ENCODE measurements at regions of chr22 and their contacts with region 1.

Region 1: GRCh38 chr22:30733181-30733631 is 38.5 kb downstream of the OSBP2 start:
- DNase-seq: no peak
- H3K4me3 ChIP-seq: no peak overlapping the region
- H3K27ac ChIP-seq: no peak overlapping the region
- H3K4me1 ChIP-seq: no peaks in the 10 kb centered on the region
- H3K27me3 ChIP-seq: no peaks in the 10 kb centered on the region
- CTCF ChIP-seq: no peak
- POLR2A ChIP-seq: no peak

Region 2: GRCh38 chr22:30553971-30554370 is 179.2 kb before region 1 on chr22:
- intact Hi-C with region 1: loop called (anchors 5 kb)
- DNase-seq: no peak
- H3K4me3 ChIP-seq: no peak overlapping the region
- H3K27ac ChIP-seq: no peak overlapping the region
- H3K4me1 ChIP-seq: no peaks in the 10 kb centered on the region
- H3K27me3 ChIP-seq: no peaks in the 10 kb centered on the region
- CTCF ChIP-seq: no peak
- POLR2A ChIP-seq: no peak

Region 3: GRCh38 chr22:31148953-31149627 is 415.9 kb after region 1 on chr22:
- intact Hi-C with region 1: no loop called
- DNase-seq: peak; percentile 69 to 76
- H3K4me3 ChIP-seq: no peak overlapping the region
- H3K27ac ChIP-seq: peak overlapping the region; percentile 70 to 74
- H3K4me1 ChIP-seq: no peaks in the 10 kb centered on the region
- H3K27me3 ChIP-seq: no peaks in the 10 kb centered on the region
- CTCF ChIP-seq: peak; percentile 79 to 95 (median 93)
- POLR2A ChIP-seq: no peak

Measured in breast epithelium (tissue), 4 donors.